Activated T-helper 1 cell treated with anti-CD3 and anti-CD28 coated beads, Interleukin-12 subunit alpha, Interleukin-12 subunit beta, Interleukin-2, Interleukin-4 antibody, amounts not matched to agents 30 ng/mL and 10 ng/mL and 1 ng/mL, durations not matched to agents 14 hours and 24 hours and 36 hours (primary cell): ENCODE measurements at regions of chr4 and their contacts with region 1.

Region 1: GRCh38 chr4:123418351-123418931 is 21.8 kb downstream of the SPRY1 start:
- DNase-seq: no peak
- H3K4me3 Mint-ChIP-seq: peak overlapping the region; percentile 25
- H3K27ac Mint-ChIP-seq: peak overlapping the region; percentile 64
- H3K4me1 Mint-ChIP-seq: peaks cover 82% of the 10 kb centered on the region
- H3K27me3 Mint-ChIP-seq: no peaks in the 10 kb centered on the region

Region 2: DNA sequence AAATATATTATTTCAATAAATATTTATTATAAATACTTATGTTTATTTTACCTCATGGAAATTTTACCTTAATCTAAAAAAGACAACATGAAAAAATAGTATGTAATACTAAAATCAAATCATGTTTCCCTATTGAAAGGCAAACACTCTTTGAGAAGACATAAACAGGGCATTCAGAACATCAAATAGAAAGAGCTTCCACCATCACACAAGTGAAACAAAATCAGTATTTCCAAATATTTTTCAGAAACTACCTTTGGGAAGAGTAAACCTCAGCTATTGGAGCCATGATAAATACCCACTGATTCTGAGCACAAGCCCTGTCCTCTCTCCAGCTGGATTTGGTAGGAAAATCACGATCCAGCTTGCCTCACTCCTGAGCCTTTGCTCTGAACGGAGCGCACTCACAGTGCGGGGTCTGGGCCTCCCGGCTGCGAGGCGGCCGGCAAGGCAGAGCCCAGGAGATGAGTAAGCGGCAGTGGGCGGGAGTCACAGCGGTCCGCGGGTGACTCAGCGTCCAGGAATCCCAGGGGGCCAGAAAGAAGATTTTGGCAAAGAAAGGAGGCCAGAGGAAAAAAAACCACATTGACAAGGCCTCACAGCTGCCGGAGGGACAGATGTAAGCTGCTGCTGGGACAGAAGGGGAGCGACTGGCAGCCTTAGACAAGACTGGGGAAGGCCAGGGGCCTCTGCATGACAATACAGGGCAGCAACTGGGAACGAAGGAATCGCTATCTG is 1707.0 kb before region 1 on chr4:
- intact Hi-C with region 1: loop called (anchors 10 kb)
- DNase-seq: peak; percentile 10
- H3K4me3 Mint-ChIP-seq: peak overlapping the region; percentile 45
- H3K27ac Mint-ChIP-seq: no peak overlapping the region
- H3K4me1 Mint-ChIP-seq: peaks cover 51% of the 10 kb centered on the region
- H3K27me3 Mint-ChIP-seq: peaks cover 24% of the 10 kb centered on the region

Region 3: GRCh38 chr4:122542411-122543236 is 875.8 kb before region 1 on chr4:
- intact Hi-C with region 1: loop called (anchors 10 kb)
- DNase-seq: no peak
- H3K4me3 Mint-ChIP-seq: peak overlapping the region; percentile 71
- H3K27ac Mint-ChIP-seq: peak overlapping the region; percentile 93
- H3K4me1 Mint-ChIP-seq: peaks cover 85% of the 10 kb centered on the region
- H3K27me3 Mint-ChIP-seq: no peaks in the 10 kb centered on the region

Region 4: GRCh38 chr4:123444290-123444731 is 25.9 kb after region 1 on chr4:
- intact Hi-C with region 1: loop called (anchors 1 kb)
- DNase-seq: peak; percentile 20
- H3K4me3 Mint-ChIP-seq: peak overlapping the region; percentile 48
- H3K27ac Mint-ChIP-seq: peak overlapping the region; percentile 94
- H3K4me1 Mint-ChIP-seq: peaks cover 35% of the 10 kb centered on the region
- H3K27me3 Mint-ChIP-seq: no peaks in the 10 kb centered on the region

Region 5: DNA sequence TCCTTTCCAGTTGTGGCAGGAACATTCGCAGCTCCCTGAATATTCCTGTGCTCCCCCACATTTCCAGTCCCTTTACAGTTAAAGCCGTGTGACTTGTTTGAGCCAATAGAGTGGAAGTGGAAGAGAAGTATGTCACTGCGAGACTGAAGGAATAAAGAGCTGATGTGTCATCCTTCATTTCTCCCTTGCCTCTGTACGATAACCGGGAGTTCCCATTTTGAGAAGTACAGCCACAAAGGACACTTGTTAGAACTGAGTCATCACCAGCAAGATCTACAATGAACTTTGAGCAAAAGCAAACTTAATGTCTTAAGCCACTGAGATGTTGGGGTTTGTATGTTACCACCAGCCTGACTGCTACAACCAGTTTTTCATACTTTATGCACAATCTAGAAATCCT is 70.5 kb after region 1 on chr4:
- intact Hi-C with region 1: loop called (anchors 1 kb)
- DNase-seq: no peak
- H3K4me3 Mint-ChIP-seq: peak overlapping the region; percentile 32
- H3K27ac Mint-ChIP-seq: peak overlapping the region; percentile 72
- H3K4me1 Mint-ChIP-seq: peaks cover 9% of the 10 kb centered on the region
- H3K27me3 Mint-ChIP-seq: peaks cover 2% of the 10 kb centered on the region

Region 6: DNA sequence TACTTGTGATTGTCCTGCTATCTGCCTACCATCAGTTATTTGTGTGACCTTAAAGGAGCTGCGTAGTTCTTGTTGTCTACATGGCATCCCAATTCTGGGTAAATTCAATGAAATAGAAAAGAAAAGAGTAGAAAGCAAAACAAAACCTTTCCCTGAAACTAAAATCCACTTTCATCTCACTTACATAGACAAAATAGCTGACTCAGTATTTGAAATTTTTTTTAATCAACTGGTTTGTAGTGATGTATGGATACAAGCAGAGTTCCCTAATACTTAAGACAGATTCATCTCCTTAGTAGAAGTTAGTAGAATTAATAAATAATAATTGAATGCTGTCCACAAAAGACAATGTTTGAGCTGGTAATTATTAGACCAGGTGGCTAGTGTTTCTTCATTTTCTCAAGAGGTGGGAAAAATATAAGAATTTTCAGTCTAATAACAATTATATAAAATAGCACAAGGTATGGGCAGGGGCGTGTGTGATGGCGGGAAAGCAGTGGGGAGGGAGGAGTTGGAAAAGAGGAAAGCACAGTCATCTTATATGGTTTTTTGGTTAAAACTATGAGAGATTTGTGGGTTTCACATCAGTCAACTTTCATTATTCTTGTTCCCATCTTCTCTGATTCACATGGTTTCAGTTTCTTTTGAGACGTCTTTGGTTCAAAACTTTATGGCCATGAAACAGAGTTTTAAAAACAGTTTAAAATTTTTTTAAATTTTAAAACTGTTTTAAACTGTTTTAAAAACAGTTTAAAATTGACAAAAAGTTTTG is 253.4 kb after region 1 on chr4:
- intact Hi-C with region 1: loop called (anchors 2 kb)
- DNase-seq: peak; percentile 14
- H3K4me3 Mint-ChIP-seq: no peak overlapping the region
- H3K27ac Mint-ChIP-seq: peak overlapping the region; percentile 7
- H3K4me1 Mint-ChIP-seq: peaks cover 43% of the 10 kb centered on the region
- H3K27me3 Mint-ChIP-seq: peaks cover 46% of the 10 kb centered on the region